CD8-positive, alpha-beta T cell (primary cell): ENCODE measurements at regions of chr5 and their contacts with region 1.

Region 1: DNA sequence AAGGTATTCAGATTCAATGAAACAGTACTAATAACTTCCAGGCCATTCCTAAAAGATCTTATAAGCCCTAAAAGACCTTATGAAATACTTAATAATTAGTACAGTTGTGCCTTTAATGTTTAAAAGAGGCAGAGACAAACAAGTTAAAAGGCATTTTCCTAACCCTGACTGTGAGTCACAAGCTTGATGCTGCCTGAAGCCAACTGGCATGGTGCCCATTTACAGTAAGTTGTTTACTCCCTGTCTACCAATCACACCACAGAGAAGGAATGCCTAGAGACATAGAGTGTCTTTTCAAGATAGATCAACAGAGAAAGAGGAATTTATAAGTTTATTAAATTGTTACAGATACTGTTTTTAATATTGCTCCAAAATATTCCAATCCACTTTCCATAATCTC is 47.8 kb downstream of the NR3C1 start:
- DNase-seq: peak; percentile 31 to 90 (median 67)
- ATAC-seq: peak; percentile 83
- H3K4me3 ChIP-seq: no peak overlapping the region
- H3K4me3 Mint-ChIP-seq: peak overlapping the region; percentile 2
- H3K27ac ChIP-seq: peak overlapping the region in 1 of 2 experiments; percentile 7
- H3K27ac Mint-ChIP-seq: peak overlapping the region; percentile 74
- H3K4me1 ChIP-seq: peaks cover 57% of the 10 kb centered on the region
- H3K4me1 Mint-ChIP-seq: peaks cover 79% of the 10 kb centered on the region
- H3K27me3 ChIP-seq: no peaks in the 10 kb centered on the region
- H3K27me3 Mint-ChIP-seq: no peaks in the 10 kb centered on the region
- CTCF ChIP-seq: no peak

Region 2: GRCh38 chr5:143205386-143205785 is 150.3 kb before region 1 on chr5:
- CTCF ChIA-PET with region 1: no interaction called
- POLR2A ChIA-PET with region 1: no interaction called
- intact Hi-C with region 1: no loop called
- DNase-seq: no peak
- ATAC-seq: no peak
- H3K4me3 ChIP-seq: no peak overlapping the region
- H3K4me3 Mint-ChIP-seq: no peak overlapping the region
- H3K27ac ChIP-seq: no peak overlapping the region
- H3K27ac Mint-ChIP-seq: no peak overlapping the region
- H3K4me1 ChIP-seq: no peaks in the 10 kb centered on the region
- H3K4me1 Mint-ChIP-seq: peaks cover 16% of the 10 kb centered on the region
- H3K27me3 ChIP-seq: no peaks in the 10 kb centered on the region
- H3K27me3 Mint-ChIP-seq: no peaks in the 10 kb centered on the region
- CTCF ChIP-seq: no peak

Region 3: GRCh38 chr5:143314659-143315058 is 41.1 kb before region 1 on chr5:
- CTCF ChIA-PET with region 1: no interaction called
- POLR2A ChIA-PET with region 1: no interaction called
- intact Hi-C with region 1: loop called in 1 of 2 experiments (anchors 5 kb)
- DNase-seq: no peak
- ATAC-seq: no peak
- H3K4me3 ChIP-seq: no peak overlapping the region
- H3K4me3 Mint-ChIP-seq: no peak overlapping the region
- H3K27ac ChIP-seq: no peak overlapping the region
- H3K27ac Mint-ChIP-seq: no peak overlapping the region
- H3K4me1 ChIP-seq: no peaks in the 10 kb centered on the region
- H3K4me1 Mint-ChIP-seq: peaks cover 37% of the 10 kb centered on the region
- H3K27me3 ChIP-seq: no peaks in the 10 kb centered on the region
- H3K27me3 Mint-ChIP-seq: no peaks in the 10 kb centered on the region
- CTCF ChIP-seq: no peak

Region 4: DNA sequence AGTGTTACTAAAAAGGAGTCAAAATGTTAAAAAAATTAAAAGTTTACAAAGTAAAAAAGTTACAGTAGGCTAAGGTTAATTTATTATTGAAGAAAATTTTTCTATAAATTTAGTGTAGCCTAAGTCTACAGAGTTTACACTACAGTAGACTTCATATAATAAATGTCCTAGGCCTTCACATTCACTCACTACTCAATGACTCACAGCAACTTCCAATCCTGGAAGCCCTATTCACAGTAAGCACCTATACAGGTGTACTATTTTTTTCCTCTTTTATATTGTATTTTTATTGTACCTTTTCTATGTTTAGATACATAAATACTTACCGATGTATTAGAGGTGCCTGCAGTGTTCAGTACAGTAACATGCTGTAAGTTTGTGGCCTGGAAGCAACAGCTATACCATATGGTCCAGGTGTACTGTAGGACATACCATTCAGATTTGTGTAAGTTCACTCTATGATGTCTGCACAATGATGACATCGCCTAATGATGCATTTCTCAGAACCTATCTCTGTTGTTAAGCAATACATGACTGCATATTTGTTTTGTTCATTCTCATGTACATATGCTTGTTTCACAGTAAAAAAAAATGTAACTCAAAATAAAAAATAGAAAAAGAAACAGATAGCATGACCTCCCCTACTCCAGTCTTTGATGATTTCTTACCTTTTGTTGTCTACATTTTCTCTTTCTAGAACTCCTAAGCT is 16.9 kb before region 1 on chr5:
- CTCF ChIA-PET with region 1: interaction called, 3 read pairs
- POLR2A ChIA-PET with region 1: interaction called, 3 read pairs
- intact Hi-C with region 1: loop called in 1 of 2 experiments (anchors 2 kb)
- DNase-seq: no peak
- ATAC-seq: peak; percentile 44
- H3K4me3 ChIP-seq: no peak overlapping the region
- H3K4me3 Mint-ChIP-seq: no peak overlapping the region
- H3K27ac ChIP-seq: no peak overlapping the region
- H3K27ac Mint-ChIP-seq: no peak overlapping the region
- H3K4me1 ChIP-seq: no peaks in the 10 kb centered on the region
- H3K4me1 Mint-ChIP-seq: peaks cover 55% of the 10 kb centered on the region
- H3K27me3 ChIP-seq: no peaks in the 10 kb centered on the region
- H3K27me3 Mint-ChIP-seq: no peaks in the 10 kb centered on the region
- CTCF ChIP-seq: no peak

Region 5: DNA sequence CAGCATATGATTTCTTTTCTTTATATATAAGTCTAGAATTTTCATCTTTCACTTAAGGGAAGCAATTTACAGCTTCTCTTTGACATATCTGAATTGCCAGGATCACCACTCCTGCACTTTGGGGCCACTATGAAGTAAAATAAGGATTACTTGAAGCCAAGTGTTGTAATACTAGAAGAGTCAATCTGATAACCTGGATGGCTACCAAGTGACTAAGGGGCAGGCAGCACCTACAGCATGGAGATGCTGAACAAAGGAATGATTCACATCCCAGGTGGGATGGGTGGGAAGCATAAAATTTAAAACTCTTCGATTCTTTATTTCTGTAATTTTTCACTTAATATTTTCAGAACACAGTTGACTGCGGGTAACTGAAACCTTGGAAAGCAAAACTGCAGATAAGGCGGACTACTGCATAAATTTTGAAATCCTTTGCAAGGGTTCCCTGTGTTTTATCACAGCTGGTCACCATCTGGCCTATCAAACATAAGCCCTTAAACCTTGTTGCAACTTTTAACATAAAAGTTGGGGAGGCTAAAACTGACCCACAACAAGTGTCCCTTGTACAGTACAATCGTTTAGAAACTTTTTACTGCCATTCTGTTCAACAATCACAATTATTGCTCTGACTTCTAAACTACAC is 16.6 kb after region 1 on chr5:
- CTCF ChIA-PET with region 1: no interaction called
- POLR2A ChIA-PET with region 1: interaction called, 3 read pairs
- intact Hi-C with region 1: loop called in 1 of 2 experiments (anchors 2 kb)
- DNase-seq: no peak
- ATAC-seq: no peak
- H3K4me3 ChIP-seq: no peak overlapping the region
- H3K4me3 Mint-ChIP-seq: no peak overlapping the region
- H3K27ac ChIP-seq: no peak overlapping the region
- H3K27ac Mint-ChIP-seq: no peak overlapping the region
- H3K4me1 ChIP-seq: peaks cover 5% of the 10 kb centered on the region
- H3K4me1 Mint-ChIP-seq: peaks cover 79% of the 10 kb centered on the region
- H3K27me3 ChIP-seq: no peaks in the 10 kb centered on the region
- H3K27me3 Mint-ChIP-seq: no peaks in the 10 kb centered on the region
- CTCF ChIP-seq: no peak

Region 6: DNA sequence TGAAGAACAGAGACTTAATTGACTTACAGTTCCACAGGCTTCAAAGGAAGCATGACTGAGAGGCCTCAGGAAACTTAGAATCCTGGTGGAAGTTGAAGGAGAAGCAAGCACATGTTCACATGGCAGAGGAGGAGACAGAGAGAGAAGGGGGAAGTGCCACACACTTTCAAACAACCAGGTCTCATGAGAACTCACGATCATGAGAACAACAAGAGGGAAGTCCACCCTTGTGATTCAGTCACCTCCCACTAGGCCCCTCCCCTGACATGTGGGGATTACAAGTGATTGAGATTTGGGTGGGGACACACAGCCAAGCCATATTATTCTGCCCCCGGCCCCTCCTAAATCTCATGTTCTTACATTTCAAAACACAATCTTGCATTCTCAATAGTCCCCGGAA is 28.3 kb after region 1 on chr5:
- CTCF ChIA-PET with region 1: interaction called, 3 read pairs
- POLR2A ChIA-PET with region 1: no interaction called
- intact Hi-C with region 1: loop called in 1 of 2 experiments (anchors 1 kb)
- DNase-seq: no peak
- ATAC-seq: no peak
- H3K4me3 ChIP-seq: no peak overlapping the region
- H3K4me3 Mint-ChIP-seq: no peak overlapping the region
- H3K27ac ChIP-seq: no peak overlapping the region
- H3K27ac Mint-ChIP-seq: no peak overlapping the region
- H3K4me1 ChIP-seq: peaks cover 47% of the 10 kb centered on the region
- H3K4me1 Mint-ChIP-seq: peaks cover 91% of the 10 kb centered on the region
- H3K27me3 ChIP-seq: no peaks in the 10 kb centered on the region
- H3K27me3 Mint-ChIP-seq: no peaks in the 10 kb centered on the region
- CTCF ChIP-seq: no peak